CD4-positive, alpha-beta memory T cell (primary cell): ENCODE measurements at regions of chr6 and their contacts with region 1.

Region 1: DNA sequence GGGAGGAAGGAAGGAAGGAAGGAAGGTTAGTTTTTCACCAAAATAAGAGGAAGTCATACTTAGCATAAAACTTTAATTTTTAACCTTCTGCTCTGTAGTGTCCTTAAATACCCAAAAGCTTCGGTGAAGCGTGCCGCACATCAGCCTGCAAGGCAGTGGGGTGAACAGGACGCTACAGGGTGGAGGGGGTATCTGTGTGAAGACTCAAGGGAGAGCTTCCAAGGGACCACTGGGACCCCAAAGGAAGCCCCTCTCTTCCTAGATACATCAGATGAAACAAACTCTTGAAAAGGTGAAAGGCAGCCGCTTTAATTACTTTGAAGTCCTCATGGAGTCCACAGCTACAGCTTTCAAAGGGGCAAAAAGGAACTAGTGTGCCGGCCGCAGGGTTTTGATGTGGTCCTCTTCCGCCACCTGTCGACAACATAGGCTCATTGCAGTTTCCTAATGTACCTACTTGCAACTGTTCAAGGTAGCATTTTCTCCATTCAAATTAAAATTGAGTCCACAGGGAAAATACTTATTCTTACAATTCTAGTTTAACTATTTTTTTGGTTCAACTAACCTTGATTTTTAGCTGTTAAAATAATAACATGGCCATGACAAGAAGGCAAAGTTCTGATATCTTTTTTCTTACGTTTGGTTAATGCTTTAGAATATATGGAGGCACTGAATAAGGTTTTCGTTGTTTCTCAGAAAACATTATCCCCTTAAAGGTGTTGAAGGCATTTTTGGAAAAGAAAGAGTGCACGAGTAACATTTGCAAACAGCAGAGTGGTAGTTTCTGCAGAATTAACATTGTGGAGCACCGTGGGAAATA is 135.0 kb upstream of the RIPOR2 start:
- DNase-seq: peak; percentile 84 to 85 (median 85)
- H3K4me3 ChIP-seq: no peak overlapping the region
- H3K4me3 Mint-ChIP-seq: peak overlapping the region in 7 of 8 donors; percentile 5 to 74 (median 48)
- H3K27ac ChIP-seq: no peak overlapping the region
- H3K27ac Mint-ChIP-seq: peak overlapping the region; percentile 80 to 94 (median 84)
- H3K4me1 ChIP-seq: no peaks in the 10 kb centered on the region
- H3K4me1 Mint-ChIP-seq: peaks cover 4 to 8% (median 6%) of the 10 kb centered on the region in 4 donors
- H3K27me3 ChIP-seq: no peaks in the 10 kb centered on the region
- H3K27me3 Mint-ChIP-seq: no peaks in the 10 kb centered on the region

Region 2: DNA sequence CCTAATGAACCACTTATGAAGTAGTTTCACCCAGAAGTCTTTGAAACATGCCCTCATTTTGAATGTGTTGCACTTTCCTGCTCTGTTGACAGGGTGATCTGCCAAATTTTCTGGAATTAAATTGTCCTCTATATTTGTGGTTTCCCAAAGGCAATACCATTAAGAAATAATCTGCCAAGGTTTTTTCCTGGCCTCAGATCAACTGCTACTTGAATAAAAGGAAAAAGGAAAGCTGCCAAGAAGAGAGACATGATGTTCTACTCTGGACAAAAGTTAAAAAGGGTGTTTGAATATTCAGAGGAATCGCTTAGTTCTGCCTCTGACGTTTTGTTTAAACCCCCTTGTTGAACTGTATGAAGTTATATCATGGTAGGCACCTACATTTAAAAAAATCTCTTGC is 234.6 kb before region 1 on chr6:
- CTCF ChIA-PET with region 1: interaction called, 5 read pairs
- POLR2A ChIA-PET with region 1: no interaction called
- intact Hi-C with region 1: loop called (anchors 5 kb)
- DNase-seq: no peak
- H3K4me3 ChIP-seq: no peak overlapping the region
- H3K4me3 Mint-ChIP-seq: no peak overlapping the region
- H3K27ac ChIP-seq: no peak overlapping the region
- H3K27ac Mint-ChIP-seq: peak overlapping the region; percentile 6 to 90 (median 48)
- H3K4me1 ChIP-seq: peaks cover 29% of the 10 kb centered on the region
- H3K4me1 Mint-ChIP-seq: peaks cover 34 to 66% (median 39%) of the 10 kb centered on the region in 4 donors
- H3K27me3 ChIP-seq: no peaks in the 10 kb centered on the region
- H3K27me3 Mint-ChIP-seq: no peaks in the 10 kb centered on the region

Region 3: GRCh38 chr6:24855395-24856245 is 215.1 kb before region 1 on chr6:
- CTCF ChIA-PET with region 1: interaction called, 18 read pairs
- POLR2A ChIA-PET with region 1: interaction called, 9 read pairs
- intact Hi-C with region 1: loop called (anchors 1 kb)
- DNase-seq: peak; percentile 76 to 82 (median 77)
- H3K4me3 ChIP-seq: no peak overlapping the region
- H3K4me3 Mint-ChIP-seq: peak overlapping the region in 5 of 8 donors; percentile 1 to 87 (median 26)
- H3K27ac ChIP-seq: peak overlapping the region; percentile 61
- H3K27ac Mint-ChIP-seq: peak overlapping the region; percentile 82 to 92 (median 90)
- H3K4me1 ChIP-seq: peaks cover 53% of the 10 kb centered on the region
- H3K4me1 Mint-ChIP-seq: peaks cover 48 to 58% (median 50%) of the 10 kb centered on the region in 4 donors
- H3K27me3 ChIP-seq: no peaks in the 10 kb centered on the region
- H3K27me3 Mint-ChIP-seq: no peaks in the 10 kb centered on the region

Region 4: DNA sequence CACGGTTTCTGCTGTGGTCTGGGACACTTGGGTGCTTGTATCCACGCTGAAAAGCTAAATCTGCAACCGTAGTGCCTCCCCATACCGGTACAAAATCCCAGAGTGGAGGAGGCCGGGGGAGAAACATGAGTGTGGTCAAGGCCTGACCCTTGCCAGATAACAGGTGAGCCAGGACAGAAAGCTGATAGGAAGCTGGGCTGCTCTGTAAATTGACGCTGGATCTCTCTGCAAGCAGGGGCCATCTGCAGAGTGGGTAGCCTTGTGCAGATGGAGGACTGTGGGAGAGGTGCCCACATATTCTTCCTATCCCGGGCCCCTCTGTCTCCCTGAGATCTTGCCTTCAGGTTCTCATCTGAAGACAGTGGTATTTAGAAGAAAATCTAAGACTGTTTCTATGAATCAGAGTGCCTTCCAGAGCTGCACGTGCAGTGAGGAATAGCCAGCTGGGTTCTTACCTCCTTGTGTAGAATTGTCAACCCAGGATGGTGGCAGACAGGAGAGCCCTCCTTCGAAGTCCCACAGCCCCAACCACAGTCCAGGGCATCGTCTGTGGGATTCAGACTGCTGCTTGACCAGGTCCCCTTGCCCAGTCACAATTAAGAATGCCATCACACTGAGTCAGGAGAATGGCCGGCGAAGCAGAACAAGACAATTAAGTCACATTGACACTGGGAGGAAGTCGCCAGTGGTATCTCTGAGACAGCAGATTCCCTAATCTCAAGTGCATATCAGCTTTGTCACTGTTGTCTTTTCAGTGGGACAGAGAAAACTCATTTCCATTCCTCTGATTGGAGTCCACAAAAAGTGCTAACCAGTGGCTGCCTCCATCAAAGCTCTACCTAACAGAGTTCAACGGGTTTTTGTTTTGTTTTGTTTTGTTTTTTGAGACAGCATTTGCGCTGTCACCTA is 35.0 kb before region 1 on chr6:
- CTCF ChIA-PET with region 1: interaction called, 306 read pairs
- POLR2A ChIA-PET with region 1: interaction called, 12 read pairs
- intact Hi-C with region 1: no loop called
- DNase-seq: peak; percentile 34 to 51 (median 37)
- H3K4me3 ChIP-seq: peak overlapping the region; percentile 44 to 68
- H3K4me3 Mint-ChIP-seq: peak overlapping the region; percentile 84 to 93 (median 90)
- H3K27ac ChIP-seq: peak overlapping the region; percentile 69
- H3K27ac Mint-ChIP-seq: peak overlapping the region; percentile 92 to 100 (median 96)
- H3K4me1 ChIP-seq: peaks cover 88% of the 10 kb centered on the region
- H3K4me1 Mint-ChIP-seq: peaks cover 61 to 88% (median 72%) of the 10 kb centered on the region in 4 donors
- H3K27me3 ChIP-seq: no peaks in the 10 kb centered on the region
- H3K27me3 Mint-ChIP-seq: no peaks in the 10 kb centered on the region

Region 5: DNA sequence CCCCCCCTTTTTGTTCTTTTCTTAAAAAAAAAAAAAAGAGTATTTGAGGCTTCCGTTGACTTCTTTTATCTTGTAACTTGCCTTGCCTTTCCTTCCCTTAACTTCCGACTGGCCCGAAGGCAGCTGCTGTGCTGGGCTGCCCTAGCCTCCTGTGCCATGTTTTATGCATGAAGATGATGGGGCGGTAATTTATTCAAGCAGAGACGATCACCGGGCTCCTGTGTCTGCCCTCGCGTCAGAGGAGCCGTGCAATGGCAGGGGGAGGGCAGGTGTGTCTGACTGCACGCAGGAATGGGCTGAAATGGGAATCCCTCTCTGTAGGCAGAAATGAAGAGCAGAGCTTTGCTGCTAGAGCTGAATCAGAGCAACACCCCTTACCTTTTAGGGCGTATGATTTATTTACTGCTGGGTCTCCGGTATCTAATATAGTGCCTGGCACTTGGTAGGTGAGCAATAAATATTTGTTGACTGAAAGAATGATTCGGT is 28.7 kb before region 1 on chr6:
- CTCF ChIA-PET with region 1: interaction called, 95 read pairs
- POLR2A ChIA-PET with region 1: interaction called, 23 read pairs
- intact Hi-C with region 1: loop called (anchors 1 kb)
- DNase-seq: peak; percentile 59 to 86 (median 65)
- H3K4me3 ChIP-seq: peak overlapping the region; percentile 67 to 82
- H3K4me3 Mint-ChIP-seq: peak overlapping the region; percentile 95 to 99 (median 96)
- H3K27ac ChIP-seq: peak overlapping the region; percentile 93
- H3K27ac Mint-ChIP-seq: peak overlapping the region; percentile 94 to 100 (median 98)
- H3K4me1 ChIP-seq: peaks cover 63% of the 10 kb centered on the region
- H3K4me1 Mint-ChIP-seq: peaks cover 50 to 85% (median 63%) of the 10 kb centered on the region in 4 donors
- H3K27me3 ChIP-seq: no peaks in the 10 kb centered on the region
- H3K27me3 Mint-ChIP-seq: no peaks in the 10 kb centered on the region

Region 6: GRCh38 chr6:25053875-25054371 is 16.8 kb before region 1 on chr6:
- CTCF ChIA-PET with region 1: interaction called, 13 read pairs
- POLR2A ChIA-PET with region 1: interaction called, 7 read pairs
- intact Hi-C with region 1: loop called (anchors 1 kb)
- DNase-seq: peak in 2 of 5 donors; percentile 28 to 30
- H3K4me3 ChIP-seq: no peak overlapping the region
- H3K4me3 Mint-ChIP-seq: peak overlapping the region in 6 of 8 donors; percentile 6 to 74 (median 37)
- H3K27ac ChIP-seq: peak overlapping the region; percentile 21
- H3K27ac Mint-ChIP-seq: peak overlapping the region; percentile 54 to 90 (median 87)
- H3K4me1 ChIP-seq: peaks cover 94% of the 10 kb centered on the region
- H3K4me1 Mint-ChIP-seq: peaks cover 61 to 88% (median 81%) of the 10 kb centered on the region in 4 donors
- H3K27me3 ChIP-seq: no peaks in the 10 kb centered on the region
- H3K27me3 Mint-ChIP-seq: no peaks in the 10 kb centered on the region

Region 7: GRCh38 chr6:25085756-25086155 is 15.0 kb after region 1 on chr6:
- CTCF ChIA-PET with region 1: interaction called, 14 read pairs
- POLR2A ChIA-PET with region 1: interaction called, 3 read pairs
- intact Hi-C with region 1: no loop called
- DNase-seq: peak in 4 of 5 donors; percentile 14 to 37 (median 22)
- H3K4me3 ChIP-seq: peak overlapping the region in 1 of 2 donors; percentile 12
- H3K4me3 Mint-ChIP-seq: peak overlapping the region in 7 of 8 donors; percentile 44 to 74 (median 70)
- H3K27ac ChIP-seq: no peak overlapping the region
- H3K27ac Mint-ChIP-seq: peak overlapping the region in 5 of 7 donors; percentile 6 to 65 (median 23)
- H3K4me1 ChIP-seq: peaks cover 32% of the 10 kb centered on the region
- H3K4me1 Mint-ChIP-seq: peaks cover 10 to 26% (median 21%) of the 10 kb centered on the region in 4 donors
- H3K27me3 ChIP-seq: no peaks in the 10 kb centered on the region
- H3K27me3 Mint-ChIP-seq: no peaks in the 10 kb centered on the region